ENCODE measurements at regions of chr13 and their contacts with region 1.

Region 1: GRCh38 chr13:62357887-62358645 is 942.4 kb upstream of the PCDH20 start:
- DNase-seq: peak; percentile 14
- CTCF ChIP-seq: peak; percentile 74

Region 2: DNA sequence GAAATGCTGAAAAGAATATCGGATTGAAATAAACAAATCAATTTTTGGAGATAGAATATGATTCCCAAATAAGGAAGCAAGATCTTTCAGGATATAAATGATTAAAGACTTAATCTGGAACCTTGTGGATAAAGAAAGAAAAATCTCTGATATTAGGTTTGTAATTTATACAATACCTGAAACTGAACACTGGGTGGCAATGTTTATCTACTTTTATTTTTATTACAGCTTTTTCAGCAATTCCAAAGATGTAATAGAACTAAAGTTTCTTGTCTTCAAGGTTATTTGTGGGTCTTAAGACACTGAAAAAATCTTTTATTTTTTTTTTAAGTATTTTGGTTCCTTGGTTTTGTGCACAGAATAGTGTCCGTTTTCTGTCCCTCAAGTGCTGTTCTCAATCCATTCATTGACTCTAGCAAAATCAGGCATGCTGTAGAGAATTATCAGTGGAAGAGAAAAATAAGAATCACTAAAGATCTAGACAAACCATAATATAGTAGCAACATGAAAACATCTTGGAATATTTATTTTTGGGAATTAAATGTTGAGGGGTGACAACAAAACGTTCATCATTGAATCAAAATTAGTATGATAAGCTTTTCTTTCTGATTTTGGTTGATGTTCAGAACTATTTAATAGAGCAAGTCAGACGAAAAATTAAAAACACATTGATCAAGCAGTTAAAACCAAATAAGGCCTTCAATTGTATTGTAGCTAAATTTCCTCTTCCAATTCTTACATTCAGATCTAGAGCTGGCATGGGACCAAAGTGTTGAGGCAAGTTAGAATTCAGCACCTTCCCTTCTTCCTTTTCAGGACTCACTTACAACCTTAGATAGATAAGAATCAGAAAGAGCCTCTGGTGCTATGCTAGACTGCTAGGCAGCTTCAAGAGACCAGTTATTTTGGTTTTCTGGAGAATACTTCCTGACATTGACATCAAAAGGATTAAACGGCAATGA is 238.0 kb before region 1 on chr13:
- CTCF ChIA-PET with region 1: interaction called, 37 read pairs
- POLR2A ChIA-PET with region 1: no interaction called
- DNase-seq: peak; percentile 12
- CTCF ChIP-seq: peak; percentile 36

Region 3: GRCh38 chr13:62432906-62433305 is 74.8 kb after region 1 on chr13:
- CTCF ChIA-PET with region 1: no interaction called
- POLR2A ChIA-PET with region 1: no interaction called
- DNase-seq: no peak
- CTCF ChIP-seq: no peak

Region 4: GRCh38 chr13:62556978-62557377 is 198.9 kb after region 1 on chr13:
- CTCF ChIA-PET with region 1: no interaction called
- POLR2A ChIA-PET with region 1: no interaction called
- DNase-seq: no peak
- CTCF ChIP-seq: no peak